ENCODE measurements at regions of chr1 and their contacts with region 1.

Region 1: DNA sequence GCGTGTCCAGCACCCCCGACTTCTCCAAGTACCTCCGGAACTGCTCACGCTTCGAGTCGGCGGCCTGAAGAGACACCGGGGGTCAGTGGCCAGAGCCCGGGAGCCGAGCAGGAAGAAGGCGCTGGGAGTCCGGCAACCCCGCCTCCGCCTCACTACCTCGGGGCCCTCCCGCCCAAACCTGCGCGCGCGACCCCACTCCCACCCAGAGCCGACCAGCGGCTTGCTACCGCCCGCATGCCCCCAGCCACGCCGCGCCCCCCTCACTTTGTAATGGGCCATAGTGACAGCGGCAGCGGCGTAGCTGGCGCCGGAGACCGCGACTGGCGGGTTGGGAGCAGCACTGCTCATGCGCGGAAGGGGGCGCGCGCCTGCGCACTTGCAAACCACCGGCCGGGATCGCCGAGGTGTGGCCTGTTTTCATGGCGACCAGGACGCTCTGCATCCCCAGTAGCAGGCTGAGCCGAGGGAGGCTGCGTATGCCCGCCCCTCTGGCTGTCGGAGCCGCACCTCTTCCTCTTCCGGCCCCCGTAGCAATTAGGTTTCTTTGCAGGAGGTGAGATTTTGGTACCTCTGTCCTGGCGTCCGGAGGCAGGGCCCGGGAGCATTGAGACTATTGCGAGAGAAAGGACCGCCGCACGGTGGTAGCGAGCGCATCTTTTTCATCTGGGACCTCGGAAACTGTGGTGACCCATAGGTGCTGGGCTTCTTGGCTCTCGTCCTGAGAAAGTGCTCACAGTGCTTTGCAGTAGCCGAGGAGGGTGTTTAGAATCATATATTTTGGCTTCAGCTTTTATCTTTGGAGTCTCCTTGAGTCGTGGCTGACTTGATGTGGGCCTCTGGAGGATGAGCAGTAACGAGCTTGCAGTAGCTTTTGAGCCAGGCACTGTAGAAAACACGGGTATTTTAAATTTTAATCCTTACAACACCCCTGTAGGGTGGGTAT is at the start of gene MYCBP:
- DNase-seq: peak; percentile 95 to 97
- ATAC-seq: peak; percentile 99 to 100 (median 100)
- H3K4me3 ChIP-seq: peak within 1 kb of the TSS; percentile 50 to 96 (median 82)
- H3K27ac ChIP-seq: peak within 1 kb of the TSS in 9 of 10 donors; percentile 56 to 86 (median 73)
- H3K4me1 ChIP-seq: peaks cover 5 to 35% (median 24%) of the 10 kb centered on the region in 9 donors
- H3K27me3 ChIP-seq: no peaks in the 10 kb centered on the region
- CTCF ChIP-seq: peak in 6 of 9 donors; percentile 14 to 44 (median 28)
- total RNA-seq, gene MYCBP: 5.4 to 22.8 (median 8.2) TPM

Region 2: GRCh38 chr1:39026051-39026865 is 153.0 kb after region 1 on chr1 and contains the start of gene NDUFS5:
- intact Hi-C with region 1: loop called in 2 of 10 experiments (anchors 10 kb)
- DNase-seq: peak; percentile 88 to 91
- ATAC-seq: peak; percentile 94 to 98 (median 96)
- H3K4me3 ChIP-seq: peak within 1 kb of the TSS; percentile 62 to 86 (median 75)
- H3K27ac ChIP-seq: peak within 1 kb of the TSS; percentile 89 to 99 (median 95)
- H3K4me1 ChIP-seq: peaks cover 3 to 35% (median 19%) of the 10 kb centered on the region in 9 donors
- H3K27me3 ChIP-seq: no peaks in the 10 kb centered on the region
- CTCF ChIP-seq: no peak
- total RNA-seq, gene NDUFS5: 303 to 646 (median 513) TPM

Region 3: DNA sequence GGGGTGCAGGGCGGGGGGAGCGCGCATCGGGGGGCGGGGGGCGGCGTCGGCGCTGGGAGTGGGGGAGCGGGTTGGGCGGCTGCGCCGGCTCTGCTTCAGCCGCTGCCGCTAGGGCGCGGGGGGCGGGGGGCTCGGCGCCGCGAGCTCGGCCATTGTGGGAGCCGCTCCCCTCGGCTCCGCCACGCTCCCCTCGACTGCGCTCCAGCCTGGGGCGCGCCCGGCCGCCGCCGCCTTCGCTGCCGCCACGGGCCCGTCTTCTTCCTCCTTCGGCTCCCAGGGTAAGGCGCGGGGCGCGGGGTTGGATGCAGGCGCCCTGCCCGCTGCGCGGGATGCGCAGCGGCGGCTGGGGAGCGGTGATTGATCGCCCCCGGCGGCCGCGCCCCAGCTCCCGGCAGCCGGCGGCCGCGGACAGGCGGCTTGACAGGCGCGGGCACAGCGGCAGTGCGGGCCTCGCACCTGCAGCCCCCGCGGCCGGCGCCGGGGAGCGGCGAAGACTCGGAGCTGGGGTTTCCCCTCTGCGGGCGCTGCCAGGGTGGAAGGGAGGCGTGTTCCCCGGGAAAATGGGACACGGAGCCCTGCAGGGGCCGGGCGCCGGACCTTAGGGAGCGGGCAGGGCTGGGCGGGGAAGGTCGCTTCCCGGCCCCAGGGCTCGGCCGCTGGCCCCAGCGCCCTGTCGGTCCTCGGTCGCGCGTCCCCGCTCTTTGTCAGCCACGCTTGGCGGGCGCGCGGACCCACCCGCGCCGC is 208.1 kb after region 1 on chr1:
- intact Hi-C with region 1: loop called in 3 of 10 experiments (anchors 10 kb)
- DNase-seq: peak in 1 of 2 donors; percentile 30
- ATAC-seq: peak in 3 of 8 donors; percentile 42 to 54 (median 46)
- H3K4me3 ChIP-seq: peak overlapping the region; percentile 27 to 68 (median 56)
- H3K27ac ChIP-seq: no peak overlapping the region
- H3K4me1 ChIP-seq: peaks cover 3 to 26% (median 18%) of the 10 kb centered on the region in 9 donors
- H3K27me3 ChIP-seq: peaks cover 0 to 43% (median 8%) of the 10 kb centered on the region in 7 donors
- CTCF ChIP-seq: peak in 1 of 9 donors; percentile 11